ENCODE measurements at regions of chr14 and their contacts with region 1.

Region 1: GRCh38 chr14:23320774-23321571 is at the start of gene PABPN1:
- DNase-seq: peak; percentile 93 to 100 (median 98)
- ATAC-seq: peak; percentile 87 to 89 (median 88)
- H3K4me3 ChIP-seq: peak within 1 kb of the TSS; percentile 80 to 92
- H3K4me3 Mint-ChIP-seq: peak within 1 kb of the TSS; percentile 88 to 93 (median 90)
- H3K27ac ChIP-seq: peak within 1 kb of the TSS; percentile 98
- H3K27ac Mint-ChIP-seq: peak within 1 kb of the TSS; percentile 98
- H3K4me1 ChIP-seq: peaks cover 10 to 26% of the 10 kb centered on the region in 2 experiments
- H3K4me1 Mint-ChIP-seq: peaks cover 30 to 32% (median 30%) of the 10 kb centered on the region in 3 donors
- H3K27me3 ChIP-seq: peaks cover 0 to 9% of the 10 kb centered on the region in 2 experiments
- H3K27me3 Mint-ChIP-seq: no peaks in the 10 kb centered on the region
- total RNA-seq, gene PABPN1: 182 to 207 (median 186) TPM

Region 2: GRCh38 chr14:23102801-23103200 is 218.2 kb before region 1 on chr14:
- CTCF ChIA-PET with region 1: interaction called in 1 of 2 experiments, 3 read pairs
- POLR2A ChIA-PET with region 1: interaction called in 1 of 2 experiments, 10 read pairs
- DNase-seq: no peak
- ATAC-seq: no peak
- H3K4me3 ChIP-seq: no peak overlapping the region
- H3K4me3 Mint-ChIP-seq: no peak overlapping the region
- H3K27ac ChIP-seq: no peak overlapping the region
- H3K27ac Mint-ChIP-seq: no peak overlapping the region
- H3K4me1 ChIP-seq: peaks cover 0 to 2% of the 10 kb centered on the region in 2 experiments
- H3K4me1 Mint-ChIP-seq: peaks cover 14 to 17% (median 14%) of the 10 kb centered on the region in 3 donors
- H3K27me3 ChIP-seq: no peaks in the 10 kb centered on the region
- H3K27me3 Mint-ChIP-seq: no peaks in the 10 kb centered on the region

Region 3: GRCh38 chr14:23245282-23245681 is 75.7 kb before region 1 on chr14:
- CTCF ChIA-PET with region 1: no interaction called
- POLR2A ChIA-PET with region 1: no interaction called
- DNase-seq: no peak
- ATAC-seq: no peak
- H3K4me3 ChIP-seq: no peak overlapping the region
- H3K4me3 Mint-ChIP-seq: no peak overlapping the region
- H3K27ac ChIP-seq: no peak overlapping the region
- H3K27ac Mint-ChIP-seq: no peak overlapping the region
- H3K4me1 ChIP-seq: no peaks in the 10 kb centered on the region
- H3K4me1 Mint-ChIP-seq: no peaks in the 10 kb centered on the region
- H3K27me3 ChIP-seq: peaks cover 0 to 3% of the 10 kb centered on the region in 2 experiments
- H3K27me3 Mint-ChIP-seq: peaks cover 10 to 12% of the 10 kb centered on the region in 2 donors

Region 4: DNA sequence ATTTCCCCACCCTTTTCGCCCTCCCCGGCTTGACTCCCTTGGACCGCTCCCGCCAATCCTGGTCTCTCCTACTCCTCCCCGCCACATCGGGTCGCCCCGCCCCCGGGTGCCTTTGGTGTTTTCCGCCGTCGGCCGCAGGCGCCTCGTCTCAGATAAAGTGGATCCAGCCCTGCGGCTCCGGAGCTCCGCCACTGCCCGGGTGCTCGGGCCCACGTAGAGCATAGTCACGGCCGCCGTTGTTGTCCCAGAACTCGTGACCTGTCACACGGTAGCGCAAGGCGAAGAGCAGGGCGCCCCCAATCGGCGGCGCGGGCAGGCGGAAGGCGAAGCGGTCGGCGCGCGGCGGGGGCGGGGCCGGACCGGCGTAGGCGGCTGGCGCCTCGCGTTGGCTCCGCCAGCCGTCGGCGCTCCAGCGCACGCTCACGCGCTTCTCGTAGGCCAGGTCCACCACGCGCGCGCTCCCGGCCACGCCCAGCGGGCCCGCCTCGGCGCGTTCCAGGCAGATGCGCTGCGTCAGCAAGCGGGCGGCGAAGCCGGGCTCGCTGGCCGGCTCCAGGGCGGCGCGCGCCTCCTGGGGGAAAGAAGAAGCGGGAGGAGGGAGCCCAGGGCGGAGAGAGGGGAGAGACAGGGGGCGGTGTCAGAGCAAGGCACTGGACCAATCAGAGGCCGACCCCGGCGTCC is 19.5 kb before region 1 on chr14:
- CTCF ChIA-PET with region 1: interaction called, 5 to 93 read pairs
- POLR2A ChIA-PET with region 1: interaction called, 5 to 30 read pairs
- DNase-seq: peak; percentile 91 to 99 (median 96)
- ATAC-seq: peak; percentile 75 to 82 (median 76)
- H3K4me3 ChIP-seq: peak overlapping the region; percentile 74 to 85
- H3K4me3 Mint-ChIP-seq: peak overlapping the region; percentile 92 to 100 (median 92)
- H3K27ac ChIP-seq: peak overlapping the region; percentile 96
- H3K27ac Mint-ChIP-seq: peak overlapping the region; percentile 93 to 94
- H3K4me1 ChIP-seq: peaks cover 9 to 26% of the 10 kb centered on the region in 2 experiments
- H3K4me1 Mint-ChIP-seq: peaks cover 15 to 34% (median 30%) of the 10 kb centered on the region in 3 donors
- H3K27me3 ChIP-seq: peaks cover 0 to 10% of the 10 kb centered on the region in 2 experiments
- H3K27me3 Mint-ChIP-seq: peaks cover 11 to 12% of the 10 kb centered on the region in 2 donors